Gastrocnemius medialis (tissue), 4 donors: ENCODE measurements at regions of chr2 and their contacts with region 1.

Region 1: GRCh38 chr2:109489969-109490368 is 123.8 kb downstream of the SEPTIN10 start:
- DNase-seq: no peak
- ATAC-seq: no peak
- H3K4me3 ChIP-seq: no peak overlapping the region
- H3K27ac ChIP-seq: no peak overlapping the region
- H3K4me1 ChIP-seq: peaks cover 13 to 15% of the 10 kb centered on the region in 2 donors
- H3K27me3 ChIP-seq: no peaks in the 10 kb centered on the region
- CTCF ChIP-seq: no peak
- POLR2A ChIP-seq: no peak

Region 2: DNA sequence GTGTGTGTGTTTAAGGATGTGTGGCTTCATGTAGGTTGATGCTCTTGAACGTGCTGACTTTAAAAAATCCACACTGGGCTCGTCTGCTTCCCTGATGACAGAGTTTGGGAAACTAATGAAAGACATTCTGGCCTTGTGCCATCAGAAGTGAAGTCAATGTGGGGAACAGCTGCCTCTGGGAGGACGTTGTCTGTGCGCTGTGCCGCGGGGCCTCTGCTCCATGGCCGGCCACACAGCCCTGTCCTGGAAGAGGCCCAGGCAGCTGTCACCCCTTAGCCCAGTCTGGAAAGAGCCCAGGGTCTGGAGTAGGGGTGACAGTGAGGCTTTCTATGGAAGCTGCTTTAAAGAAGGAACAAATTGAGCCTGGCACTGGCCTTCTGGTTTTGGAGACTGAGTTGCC is 205.1 kb before region 1 on chr2:
- in situ Hi-C with region 1: no loop called
- intact Hi-C with region 1: no loop called
- DNase-seq: peak in 1 of 2 donors; percentile 31
- ATAC-seq: peak; percentile 35 to 51
- H3K4me3 ChIP-seq: no peak overlapping the region
- H3K27ac ChIP-seq: peak overlapping the region in 2 of 4 donors; percentile 6 to 67
- H3K4me1 ChIP-seq: peaks cover 32 to 40% of the 10 kb centered on the region in 2 donors
- H3K27me3 ChIP-seq: no peaks in the 10 kb centered on the region
- CTCF ChIP-seq: no peak
- POLR2A ChIP-seq: no peak

Region 3: DNA sequence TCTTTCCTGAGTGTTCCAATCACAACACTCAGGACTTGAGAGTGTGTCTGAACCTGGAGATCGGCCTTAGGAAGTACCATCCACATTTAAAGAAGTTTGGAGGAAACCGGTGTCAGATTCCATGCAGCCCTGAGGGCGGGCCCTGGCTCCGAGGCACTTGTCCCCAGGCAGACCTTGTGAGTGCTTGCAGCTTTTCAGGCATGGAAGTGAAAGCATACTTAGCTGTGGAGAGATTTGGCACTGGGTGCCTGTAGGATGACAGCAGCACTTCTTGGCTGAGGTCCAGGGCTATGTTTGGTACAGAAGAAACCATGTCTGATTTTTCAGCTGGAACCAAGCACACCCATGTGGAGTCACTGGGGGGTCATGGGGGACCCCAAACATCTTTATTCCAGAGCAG is 107.0 kb before region 1 on chr2:
- in situ Hi-C with region 1: no loop called
- intact Hi-C with region 1: loop called (anchors 5 kb)
- DNase-seq: peak; percentile 83
- ATAC-seq: peak; percentile 74 to 79
- H3K4me3 ChIP-seq: no peak overlapping the region
- H3K27ac ChIP-seq: peak overlapping the region; percentile 67 to 72 (median 70)
- H3K4me1 ChIP-seq: peaks cover 36 to 52% of the 10 kb centered on the region in 2 donors
- H3K27me3 ChIP-seq: no peaks in the 10 kb centered on the region
- CTCF ChIP-seq: no peak
- POLR2A ChIP-seq: no peak

Region 4: DNA sequence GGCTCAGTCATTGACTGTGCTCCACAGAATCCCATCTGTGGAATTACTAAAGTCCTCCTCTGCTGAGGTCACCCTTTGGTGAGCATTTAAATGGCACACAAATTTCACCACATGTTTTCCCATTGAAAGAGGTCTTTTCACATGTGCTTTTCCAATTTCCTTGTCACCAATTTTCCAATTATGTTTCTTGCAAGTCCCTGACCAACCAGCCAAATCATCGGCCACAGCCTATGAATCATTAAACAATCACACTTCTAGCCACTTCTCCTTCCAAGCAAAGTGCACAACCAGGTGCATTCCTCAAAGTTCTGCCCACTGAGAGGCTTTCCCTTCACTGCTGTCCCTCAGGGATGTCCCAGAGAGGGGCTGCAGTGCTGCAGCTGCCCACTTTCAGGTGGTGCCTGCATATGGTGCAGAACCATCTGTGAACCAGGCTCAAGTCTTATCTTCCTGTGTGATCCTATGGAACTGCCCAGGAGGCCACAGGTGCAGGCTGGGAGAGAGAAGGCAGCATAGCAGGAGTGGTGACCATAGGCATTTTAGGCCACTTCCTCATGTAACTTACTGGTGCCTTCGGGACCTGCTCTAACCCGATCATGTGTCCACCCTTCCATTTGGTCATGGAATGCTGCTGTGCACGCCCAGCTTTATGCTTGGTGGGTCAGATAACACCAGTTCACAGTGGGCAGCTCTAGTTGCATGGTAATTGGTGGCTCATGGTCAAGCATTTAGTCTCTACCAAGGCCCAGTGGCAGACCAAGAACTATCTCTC is 29.2 kb before region 1 on chr2:
- in situ Hi-C with region 1: no loop called
- intact Hi-C with region 1: no loop called
- DNase-seq: no peak
- ATAC-seq: no peak
- H3K4me3 ChIP-seq: no peak overlapping the region
- H3K27ac ChIP-seq: no peak overlapping the region
- H3K4me1 ChIP-seq: peaks cover 7 to 13% of the 10 kb centered on the region in 2 donors
- H3K27me3 ChIP-seq: no peaks in the 10 kb centered on the region
- CTCF ChIP-seq: no peak
- POLR2A ChIP-seq: no peak